ENCODE measurements at regions of chr17 and their contacts with region 1.

Region 1: GRCh38 chr17:54153423-54153822 is 330.7 kb downstream of the KIF2B start:
- DNase-seq: no peak
- ATAC-seq: no peak
- H3K4me3 ChIP-seq: no peak overlapping the region
- H3K4me3 Mint-ChIP-seq: no peak overlapping the region
- H3K27ac ChIP-seq: no peak overlapping the region
- H3K27ac Mint-ChIP-seq: no peak overlapping the region
- H3K4me1 ChIP-seq: no peaks in the 10 kb centered on the region
- H3K4me1 Mint-ChIP-seq: no peaks in the 10 kb centered on the region
- H3K27me3 ChIP-seq: no peaks in the 10 kb centered on the region
- H3K27me3 Mint-ChIP-seq: no peaks in the 10 kb centered on the region
- CTCF ChIP-seq: no peak

Region 2: DNA sequence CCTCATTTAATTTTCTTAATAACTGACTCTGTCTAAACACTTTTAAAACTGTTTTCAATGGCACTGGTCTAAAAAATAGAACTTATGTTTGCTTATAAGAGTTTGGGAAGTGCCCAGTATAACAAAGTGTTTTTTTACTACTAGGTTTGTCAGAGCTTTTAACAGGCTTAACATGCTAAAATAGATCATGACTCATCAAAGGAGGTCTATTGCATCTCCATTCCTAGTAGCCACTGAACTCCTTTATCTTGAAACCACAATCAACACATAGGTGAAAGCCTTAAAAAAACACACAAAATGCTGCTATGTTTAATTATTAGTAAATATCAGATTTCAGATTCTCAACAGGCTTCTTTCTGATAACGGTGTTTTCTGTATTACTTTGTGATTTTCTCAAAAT is 527.1 kb before region 1 on chr17:
- CTCF ChIA-PET with region 1: no interaction called
- POLR2A ChIA-PET with region 1: no interaction called
- intact Hi-C with region 1: no loop called
- DNase-seq: no peak
- ATAC-seq: no peak
- H3K4me3 ChIP-seq: no peak overlapping the region
- H3K4me3 Mint-ChIP-seq: no peak overlapping the region
- H3K27ac ChIP-seq: no peak overlapping the region
- H3K27ac Mint-ChIP-seq: no peak overlapping the region
- H3K4me1 ChIP-seq: no peaks in the 10 kb centered on the region
- H3K4me1 Mint-ChIP-seq: no peaks in the 10 kb centered on the region
- H3K27me3 ChIP-seq: no peaks in the 10 kb centered on the region
- H3K27me3 Mint-ChIP-seq: no peaks in the 10 kb centered on the region
- CTCF ChIP-seq: no peak

Region 3: GRCh38 chr17:54046570-54046969 is 106.9 kb before region 1 on chr17:
- CTCF ChIA-PET with region 1: no interaction called
- POLR2A ChIA-PET with region 1: no interaction called
- intact Hi-C with region 1: no loop called
- DNase-seq: no peak
- ATAC-seq: no peak
- H3K4me3 ChIP-seq: no peak overlapping the region
- H3K4me3 Mint-ChIP-seq: no peak overlapping the region
- H3K27ac ChIP-seq: no peak overlapping the region
- H3K27ac Mint-ChIP-seq: no peak overlapping the region
- H3K4me1 ChIP-seq: no peaks in the 10 kb centered on the region
- H3K4me1 Mint-ChIP-seq: no peaks in the 10 kb centered on the region
- H3K27me3 ChIP-seq: no peaks in the 10 kb centered on the region
- H3K27me3 Mint-ChIP-seq: no peaks in the 10 kb centered on the region
- CTCF ChIP-seq: no peak

Region 4: DNA sequence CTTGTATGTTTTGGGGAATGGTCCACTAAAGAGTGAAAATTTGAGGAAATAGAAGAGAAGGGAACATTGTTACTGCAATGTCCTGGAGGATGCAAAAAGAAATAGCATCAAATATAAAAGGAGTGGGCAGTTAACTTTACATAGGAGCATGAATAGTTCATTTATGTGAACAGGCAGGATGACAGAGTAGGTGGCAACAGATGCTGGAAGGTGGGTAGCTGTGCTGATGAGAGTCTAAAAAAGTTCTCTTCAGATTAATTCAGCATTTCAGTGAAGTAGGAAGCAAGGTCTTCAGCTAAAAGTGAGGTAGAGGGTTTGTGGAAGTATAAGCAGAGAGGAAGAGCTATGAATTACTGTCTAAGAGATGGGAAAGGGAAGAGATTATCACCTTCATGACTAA is 54.2 kb before region 1 on chr17:
- CTCF ChIA-PET with region 1: no interaction called
- POLR2A ChIA-PET with region 1: no interaction called
- intact Hi-C with region 1: loop called (anchors 5 to 10 kb)
- DNase-seq: no peak
- ATAC-seq: no peak
- H3K4me3 ChIP-seq: no peak overlapping the region
- H3K4me3 Mint-ChIP-seq: no peak overlapping the region
- H3K27ac ChIP-seq: no peak overlapping the region
- H3K27ac Mint-ChIP-seq: no peak overlapping the region
- H3K4me1 ChIP-seq: no peaks in the 10 kb centered on the region
- H3K4me1 Mint-ChIP-seq: no peaks in the 10 kb centered on the region
- H3K27me3 ChIP-seq: no peaks in the 10 kb centered on the region
- H3K27me3 Mint-ChIP-seq: no peaks in the 10 kb centered on the region
- CTCF ChIP-seq: no peak

Region 5: GRCh38 chr17:54111576-54111975 is 41.8 kb before region 1 on chr17:
- CTCF ChIA-PET with region 1: no interaction called
- POLR2A ChIA-PET with region 1: no interaction called
- intact Hi-C with region 1: loop called in 1 of 2 experiments (anchors 5 kb)
- DNase-seq: no peak
- ATAC-seq: no peak
- H3K4me3 ChIP-seq: no peak overlapping the region
- H3K4me3 Mint-ChIP-seq: no peak overlapping the region
- H3K27ac ChIP-seq: no peak overlapping the region
- H3K27ac Mint-ChIP-seq: no peak overlapping the region
- H3K4me1 ChIP-seq: no peaks in the 10 kb centered on the region
- H3K4me1 Mint-ChIP-seq: no peaks in the 10 kb centered on the region
- H3K27me3 ChIP-seq: no peaks in the 10 kb centered on the region
- H3K27me3 Mint-ChIP-seq: no peaks in the 10 kb centered on the region
- CTCF ChIP-seq: no peak

Region 6: DNA sequence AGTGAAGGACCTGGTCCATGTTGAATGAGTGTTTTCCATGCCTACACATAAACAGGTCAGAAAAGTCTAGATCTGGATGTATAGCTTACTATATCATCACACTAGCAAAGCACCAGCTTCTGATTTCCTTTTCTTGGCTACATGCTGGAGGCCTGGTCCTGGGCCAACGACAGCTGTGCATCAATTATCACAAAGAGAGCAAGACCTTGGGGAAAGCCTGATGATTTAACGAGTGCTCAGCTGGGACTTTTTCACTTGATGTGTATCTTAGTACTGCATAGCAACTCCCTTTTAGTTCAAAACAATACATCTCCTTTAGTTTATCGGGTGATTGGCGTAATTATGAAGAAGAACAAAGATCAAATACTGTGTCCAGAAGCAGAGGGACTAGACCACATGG is 27.5 kb after region 1 on chr17:
- CTCF ChIA-PET with region 1: no interaction called
- POLR2A ChIA-PET with region 1: no interaction called
- intact Hi-C with region 1: no loop called
- DNase-seq: no peak
- ATAC-seq: no peak
- H3K4me3 ChIP-seq: no peak overlapping the region
- H3K4me3 Mint-ChIP-seq: no peak overlapping the region
- H3K27ac ChIP-seq: no peak overlapping the region
- H3K27ac Mint-ChIP-seq: no peak overlapping the region
- H3K4me1 ChIP-seq: no peaks in the 10 kb centered on the region
- H3K4me1 Mint-ChIP-seq: no peaks in the 10 kb centered on the region
- H3K27me3 ChIP-seq: no peaks in the 10 kb centered on the region
- H3K27me3 Mint-ChIP-seq: no peaks in the 10 kb centered on the region
- CTCF ChIP-seq: no peak

Region 7: GRCh38 chr17:54235571-54235970 is 82.1 kb after region 1 on chr17:
- CTCF ChIA-PET with region 1: no interaction called
- POLR2A ChIA-PET with region 1: no interaction called
- intact Hi-C with region 1: no loop called
- DNase-seq: no peak
- ATAC-seq: no peak
- H3K4me3 ChIP-seq: no peak overlapping the region
- H3K4me3 Mint-ChIP-seq: no peak overlapping the region
- H3K27ac ChIP-seq: no peak overlapping the region
- H3K27ac Mint-ChIP-seq: no peak overlapping the region
- H3K4me1 ChIP-seq: no peaks in the 10 kb centered on the region
- H3K4me1 Mint-ChIP-seq: no peaks in the 10 kb centered on the region
- H3K27me3 ChIP-seq: no peaks in the 10 kb centered on the region
- H3K27me3 Mint-ChIP-seq: no peaks in the 10 kb centered on the region
- CTCF ChIP-seq: no peak